Kidney (tissue), 22 donors: ENCODE measurements at regions of chr19 and their contacts with region 1.

Region 1: GRCh38 chr19:2962045-2962561 is 15.3 kb upstream of the TLE6 start:
- DNase-seq: peak in 4 of 5 donors; percentile 74 to 93 (median 84)
- H3K4me3 ChIP-seq: peak overlapping the region in 1 of 3 donors; percentile 33
- H3K27ac ChIP-seq: no peak overlapping the region
- H3K4me1 ChIP-seq: no peaks in the 10 kb centered on the region
- H3K27me3 ChIP-seq: no peaks in the 10 kb centered on the region
- CTCF ChIP-seq: peak; percentile 81

Region 2: DNA sequence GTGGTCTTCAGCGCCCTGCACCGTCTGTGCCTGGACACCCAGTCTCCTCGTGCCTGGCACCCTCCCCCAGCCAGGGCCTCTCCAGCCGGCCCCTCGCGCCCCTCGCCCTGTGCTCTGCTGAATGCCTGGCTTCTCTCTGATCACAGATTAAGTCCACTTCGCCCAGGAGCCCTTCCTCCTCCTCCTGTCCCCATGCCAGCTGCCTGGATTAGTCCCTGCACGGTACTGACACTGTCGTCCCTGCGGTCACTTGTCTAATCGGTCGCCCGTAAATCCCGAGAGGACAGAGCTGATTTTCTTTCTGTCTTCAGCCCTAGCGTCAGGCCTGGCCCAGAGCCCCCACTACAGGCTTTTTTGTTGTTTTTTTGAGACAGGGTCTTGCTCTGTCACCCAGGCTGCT is 170.2 kb before region 1 on chr19:
- intact Hi-C with region 1: no loop called
- DNase-seq: no peak
- H3K4me3 ChIP-seq: no peak overlapping the region
- H3K27ac ChIP-seq: no peak overlapping the region
- H3K4me1 ChIP-seq: no peaks in the 10 kb centered on the region
- H3K27me3 ChIP-seq: no peaks in the 10 kb centered on the region
- CTCF ChIP-seq: no peak

Region 3: DNA sequence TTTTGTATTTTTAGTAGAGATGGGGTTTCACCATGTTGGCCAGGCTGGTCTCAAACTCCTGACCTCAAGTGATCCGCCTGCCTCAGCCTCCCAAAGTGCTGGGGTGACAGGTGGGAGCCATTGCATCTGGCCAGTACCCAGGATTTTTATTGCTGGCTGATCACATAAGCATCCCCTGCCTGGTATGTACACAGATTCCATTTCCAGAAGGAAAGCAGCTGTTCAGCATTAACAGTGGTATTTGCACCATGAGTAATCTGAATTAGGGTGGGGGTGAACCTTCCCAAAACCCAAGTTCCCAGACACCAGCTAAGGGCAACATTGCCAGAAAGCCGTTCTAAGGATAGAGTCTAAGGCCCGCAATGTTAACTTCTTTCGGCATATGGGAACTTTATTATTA is 113.5 kb before region 1 on chr19:
- intact Hi-C with region 1: no loop called
- DNase-seq: no peak
- H3K4me3 ChIP-seq: no peak overlapping the region
- H3K27ac ChIP-seq: no peak overlapping the region
- H3K4me1 ChIP-seq: peaks cover 0 to 3% (median 0%) of the 10 kb centered on the region in 3 donors
- H3K27me3 ChIP-seq: no peaks in the 10 kb centered on the region
- CTCF ChIP-seq: no peak

Region 4: GRCh38 chr19:3108775-3109174 is 146.7 kb after region 1 on chr19:
- intact Hi-C with region 1: loop called (anchors 10 kb)
- DNase-seq: peak in 4 of 5 donors; percentile 41 to 81 (median 54)
- H3K4me3 ChIP-seq: no peak overlapping the region
- H3K27ac ChIP-seq: no peak overlapping the region
- H3K4me1 ChIP-seq: peaks cover 0 to 27% (median 13%) of the 10 kb centered on the region in 3 donors
- H3K27me3 ChIP-seq: no peaks in the 10 kb centered on the region
- CTCF ChIP-seq: peak; percentile 79